ENCODE measurements at regions of chr4 and their contacts with region 1.

Region 1: GRCh38 chr4:183098723-183099536 is at the start of gene WWC2:
- DNase-seq: peak; percentile 77 to 93
- H3K4me3 ChIP-seq: peak within 1 kb of the TSS; percentile 67
- H3K27ac ChIP-seq: peak within 1 kb of the TSS; percentile 89
- H3K4me1 ChIP-seq: peaks cover 35% of the 10 kb centered on the region
- H3K27me3 ChIP-seq: no peaks in the 10 kb centered on the region
- CTCF ChIP-seq: no peak
- total RNA-seq, gene WWC2: 42.3 and 46.5 TPM in 2 replicates

Region 2: DNA sequence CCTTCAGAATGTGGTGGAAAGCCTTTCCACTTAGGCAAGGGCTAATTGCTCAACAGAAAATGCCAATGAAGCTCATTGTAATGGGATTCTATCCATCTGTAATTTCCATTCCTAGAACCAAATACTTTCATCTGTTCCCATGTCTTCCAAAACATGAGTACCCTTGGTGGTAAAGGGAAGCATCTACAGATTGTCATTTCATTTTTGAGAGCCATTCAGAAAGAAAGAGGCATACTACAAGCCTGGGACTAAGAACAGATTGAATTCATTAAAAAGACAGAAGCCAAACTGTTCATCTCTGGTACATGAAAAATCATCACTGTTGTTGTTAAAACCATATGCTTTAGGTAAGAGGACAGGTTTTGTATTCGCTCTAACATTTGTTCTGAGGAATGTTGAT is 138.2 kb before region 1 on chr4:
- CTCF ChIA-PET with region 1: no interaction called
- POLR2A ChIA-PET with region 1: no interaction called
- intact Hi-C with region 1: no loop called
- DNase-seq: no peak
- H3K4me3 ChIP-seq: no peak overlapping the region
- H3K27ac ChIP-seq: no peak overlapping the region
- H3K4me1 ChIP-seq: no peaks in the 10 kb centered on the region
- H3K27me3 ChIP-seq: no peaks in the 10 kb centered on the region
- CTCF ChIP-seq: no peak

Region 3: GRCh38 chr4:183118585-183118984 is 19.7 kb after region 1 on chr4:
- CTCF ChIA-PET with region 1: no interaction called
- POLR2A ChIA-PET with region 1: interaction called, 12 read pairs
- intact Hi-C with region 1: loop called (anchors 1 kb)
- DNase-seq: peak; percentile 53 to 86
- H3K4me3 ChIP-seq: no peak overlapping the region
- H3K27ac ChIP-seq: peak overlapping the region; percentile 54
- H3K4me1 ChIP-seq: peaks cover 14% of the 10 kb centered on the region
- H3K27me3 ChIP-seq: no peaks in the 10 kb centered on the region
- CTCF ChIP-seq: no peak

Region 4: DNA sequence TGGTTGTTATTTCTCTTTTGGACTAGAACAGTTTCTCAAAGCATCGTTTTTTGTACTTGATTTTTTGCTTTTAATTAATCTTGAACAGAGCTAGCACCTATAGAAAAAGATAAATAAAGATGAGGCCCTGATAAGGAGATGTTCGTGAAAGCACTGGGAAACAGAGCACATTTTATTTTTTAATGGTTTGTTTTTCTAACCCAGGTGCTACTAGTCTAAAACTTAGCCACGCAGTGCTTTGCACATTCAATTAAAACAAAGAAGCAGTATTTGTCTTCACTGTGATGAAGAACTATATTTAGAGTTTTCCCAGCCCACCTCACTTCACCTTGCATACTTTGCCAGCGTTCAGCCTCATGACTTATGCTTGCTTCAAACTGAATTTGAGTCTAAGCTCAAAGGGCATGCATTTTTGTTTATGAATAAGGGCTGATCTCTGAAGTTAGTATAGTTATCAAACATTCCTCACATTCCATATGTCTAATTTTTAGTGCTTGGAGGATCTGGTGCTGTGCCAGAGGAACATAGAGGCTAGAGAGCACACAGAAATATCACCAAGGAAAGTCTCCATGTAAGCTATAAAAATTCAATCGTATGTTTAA is 76.8 kb after region 1 on chr4:
- CTCF ChIA-PET with region 1: no interaction called
- POLR2A ChIA-PET with region 1: interaction called, 10 read pairs
- intact Hi-C with region 1: loop called (anchors 5 kb)
- DNase-seq: peak in 1 of 2 experiments; percentile 69
- H3K4me3 ChIP-seq: no peak overlapping the region
- H3K27ac ChIP-seq: 0 out of 2 replicates have a peak overlapping the region, but pooled peaks have one; percentile 39
- H3K4me1 ChIP-seq: peaks cover 16% of the 10 kb centered on the region
- H3K27me3 ChIP-seq: no peaks in the 10 kb centered on the region
- CTCF ChIP-seq: no peak

Region 5: GRCh38 chr4:183200453-183200852 is 101.5 kb after region 1 on chr4:
- CTCF ChIA-PET with region 1: no interaction called
- POLR2A ChIA-PET with region 1: interaction called, 4 read pairs
- intact Hi-C with region 1: loop called (anchors 1 kb)
- DNase-seq: peak; percentile 64 to 70
- H3K4me3 ChIP-seq: no peak overlapping the region
- H3K27ac ChIP-seq: peak overlapping the region; percentile 65
- H3K4me1 ChIP-seq: peaks cover 34% of the 10 kb centered on the region
- H3K27me3 ChIP-seq: no peaks in the 10 kb centered on the region
- CTCF ChIP-seq: no peak

Measured in PC-9 (cell line).